ENCODE measurements at regions of chr1 and their contacts with region 1.

Region 1: GRCh38 chr1:202154766-202155477 is 5.5 kb downstream of the PTPN7 start:
- DNase-seq: peak in 5 of 9 donors; percentile 45 to 52 (median 48)
- ATAC-seq: peak; percentile 85
- H3K4me3 ChIP-seq: no peak overlapping the region
- H3K4me3 Mint-ChIP-seq: peak overlapping the region in 2 of 10 donors; percentile 1 to 46
- H3K27ac ChIP-seq: peak overlapping the region; percentile 47
- H3K27ac Mint-ChIP-seq: peak overlapping the region; percentile 17 to 87 (median 67)
- H3K4me1 ChIP-seq: peaks cover 29 to 35% of the 10 kb centered on the region in 2 donors
- H3K4me1 Mint-ChIP-seq: peaks cover 28 to 58% (median 51%) of the 10 kb centered on the region in 7 donors
- H3K27me3 ChIP-seq: no peaks in the 10 kb centered on the region
- H3K27me3 Mint-ChIP-seq: no peaks in the 10 kb centered on the region

Region 2: GRCh38 chr1:202135221-202135721 is 19.7 kb before region 1 on chr1:
- CTCF ChIA-PET with region 1: interaction called, 12 read pairs
- POLR2A ChIA-PET with region 1: no interaction called
- intact Hi-C with region 1: no loop called
- DNase-seq: peak in 7 of 9 donors; percentile 27 to 63 (median 53)
- ATAC-seq: peak; percentile 92
- H3K4me3 ChIP-seq: no peak overlapping the region
- H3K4me3 Mint-ChIP-seq: no peak overlapping the region
- H3K27ac ChIP-seq: no peak overlapping the region
- H3K27ac Mint-ChIP-seq: peak overlapping the region in 2 of 9 donors; percentile 24 to 43
- H3K4me1 ChIP-seq: no peaks in the 10 kb centered on the region
- H3K4me1 Mint-ChIP-seq: peaks cover 4 to 15% (median 8%) of the 10 kb centered on the region in 7 donors
- H3K27me3 ChIP-seq: no peaks in the 10 kb centered on the region
- H3K27me3 Mint-ChIP-seq: no peaks in the 10 kb centered on the region

Region 3: DNA sequence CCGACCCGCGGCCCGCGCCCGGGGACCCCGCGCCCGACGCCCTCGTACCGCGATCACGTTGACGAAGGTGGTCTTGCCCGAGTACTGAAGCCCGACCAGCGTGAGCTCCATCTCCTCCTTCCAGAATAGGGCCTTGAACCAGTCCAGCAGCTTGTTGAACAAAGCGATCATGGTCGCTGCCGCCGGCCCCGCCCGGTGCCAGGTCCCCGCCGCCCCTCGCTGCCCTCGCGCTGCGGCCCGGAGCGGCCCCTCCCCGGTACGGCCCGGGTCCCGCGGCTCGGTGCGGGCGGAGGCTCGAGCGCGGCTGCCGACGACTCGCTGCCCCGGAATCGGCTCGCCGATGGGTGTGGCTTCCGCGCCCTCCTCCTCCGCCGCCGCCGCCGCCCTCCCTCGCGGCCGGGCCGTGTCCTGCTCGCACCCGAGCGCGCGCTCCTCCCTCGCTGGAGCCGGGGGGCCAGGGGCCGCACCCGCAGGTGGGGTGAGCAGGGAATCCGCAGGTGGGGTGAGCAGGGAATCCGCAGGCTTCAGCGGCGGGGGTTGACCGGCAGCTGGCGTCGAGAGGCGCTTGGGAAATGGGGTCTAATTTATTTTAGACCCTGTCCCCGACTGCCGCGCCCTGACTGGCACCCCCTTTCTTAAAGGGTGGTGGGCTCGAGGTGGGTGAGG is 10.4 kb before region 1 on chr1 and contains the start of gene ARL8A:
- CTCF ChIA-PET with region 1: interaction called, 6 read pairs
- POLR2A ChIA-PET with region 1: interaction called, 54 read pairs
- intact Hi-C with region 1: loop called (anchors 1 kb)
- DNase-seq: peak; percentile 47 to 81 (median 62)
- ATAC-seq: peak; percentile 81
- H3K4me3 ChIP-seq: peak within 1 kb of the TSS; percentile 83
- H3K4me3 Mint-ChIP-seq: peak within 1 kb of the TSS; percentile 90 to 98 (median 93)
- H3K27ac ChIP-seq: peak within 1 kb of the TSS; percentile 83
- H3K27ac Mint-ChIP-seq: peak within 1 kb of the TSS; percentile 85 to 98 (median 92)
- H3K4me1 ChIP-seq: peaks cover 14 to 21% of the 10 kb centered on the region in 2 donors
- H3K4me1 Mint-ChIP-seq: peaks cover 16 to 44% (median 38%) of the 10 kb centered on the region in 7 donors
- H3K27me3 ChIP-seq: no peaks in the 10 kb centered on the region
- H3K27me3 Mint-ChIP-seq: no peaks in the 10 kb centered on the region
- total RNA-seq, gene ARL8A: 38.2 to 99.4 (median 54.3) TPM

Region 4: DNA sequence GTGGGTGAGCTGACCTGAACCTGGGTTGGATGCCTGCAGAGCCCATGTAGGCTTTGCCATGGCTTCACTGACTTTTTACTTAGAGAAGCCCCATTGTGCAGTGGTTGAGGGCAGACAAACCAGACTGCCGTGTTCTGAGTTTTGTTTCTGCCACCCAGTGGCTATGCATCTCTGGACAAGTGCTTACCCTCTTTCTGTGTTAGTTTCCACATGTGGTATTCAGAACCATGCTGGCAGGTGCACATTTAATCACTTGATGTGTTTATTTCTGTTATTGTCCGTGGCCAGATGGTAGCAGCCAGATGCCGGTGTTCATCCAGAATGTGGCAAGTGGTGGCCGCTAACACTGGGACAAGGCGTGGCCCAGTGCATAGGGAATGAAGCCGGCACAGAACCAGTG is 15.8 kb after region 1 on chr1:
- CTCF ChIA-PET with region 1: interaction called, 7 read pairs
- POLR2A ChIA-PET with region 1: interaction called, 3 read pairs
- intact Hi-C with region 1: loop called in 1 of 2 experiments (anchors 2 kb)
- DNase-seq: no peak
- ATAC-seq: peak; percentile 42
- H3K4me3 ChIP-seq: no peak overlapping the region
- H3K4me3 Mint-ChIP-seq: no peak overlapping the region
- H3K27ac ChIP-seq: no peak overlapping the region
- H3K27ac Mint-ChIP-seq: no peak overlapping the region
- H3K4me1 ChIP-seq: peaks cover 4 to 8% of the 10 kb centered on the region in 2 donors
- H3K4me1 Mint-ChIP-seq: peaks cover 0 to 21% (median 11%) of the 10 kb centered on the region in 7 donors
- H3K27me3 ChIP-seq: no peaks in the 10 kb centered on the region
- H3K27me3 Mint-ChIP-seq: no peaks in the 10 kb centered on the region